ENCODE measurements at regions of chr1 and their contacts with region 1.

Region 1: DNA sequence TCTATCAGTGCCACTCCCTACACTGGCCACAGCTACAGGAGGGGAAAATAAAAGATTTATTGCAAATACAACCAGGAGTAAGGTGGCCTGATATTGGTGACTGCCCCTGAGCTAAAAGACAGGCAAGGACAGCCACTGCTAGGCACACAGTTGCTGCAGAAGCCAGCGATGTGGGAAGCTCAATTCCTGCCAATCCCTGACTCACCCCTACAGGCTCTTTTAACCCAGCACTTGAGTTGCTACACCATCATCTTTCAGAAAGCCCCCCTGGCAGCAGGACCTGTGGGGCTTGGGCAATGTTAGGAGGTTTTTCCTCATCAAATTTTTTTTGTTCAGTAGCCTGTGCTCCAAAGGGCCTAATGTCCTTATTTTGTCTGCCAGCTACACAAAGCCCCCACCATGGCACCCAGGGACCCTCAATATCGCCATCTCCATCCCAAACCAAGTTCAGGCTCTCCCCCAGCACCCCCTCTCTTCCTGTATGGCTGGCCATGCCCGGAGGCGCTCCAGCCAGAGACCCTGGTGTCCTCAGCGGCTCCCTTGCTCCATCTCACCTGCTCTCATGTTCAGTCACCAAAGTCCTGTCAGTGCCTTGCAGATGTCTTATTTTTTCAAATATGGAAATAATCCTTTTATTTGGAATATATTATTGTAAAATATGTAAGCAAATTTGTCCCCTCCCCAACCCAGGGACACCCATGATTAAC is 13.4 kb downstream of the CLEC20A start:
- DNase-seq: no peak
- ATAC-seq: no peak

Region 2: GRCh38 chr1:178397678-178398077 is 85.7 kb before region 1 on chr1:
- intact Hi-C with region 1: no loop called
- DNase-seq: no peak
- ATAC-seq: no peak

Region 3: GRCh38 chr1:178509414-178510007 is 26.1 kb after region 1 on chr1:
- intact Hi-C with region 1: loop called (anchors 2 kb)
- DNase-seq: no peak
- ATAC-seq: no peak

Region 4: GRCh38 chr1:178532392-178532791 is 49.0 kb after region 1 on chr1:
- intact Hi-C with region 1: no loop called
- DNase-seq: peak; percentile 90
- ATAC-seq: peak; percentile 87